Common myeloid progenitor, CD34-positive (primary cell): ENCODE measurements at regions of chr7 and their contacts with region 1.

Region 1: DNA sequence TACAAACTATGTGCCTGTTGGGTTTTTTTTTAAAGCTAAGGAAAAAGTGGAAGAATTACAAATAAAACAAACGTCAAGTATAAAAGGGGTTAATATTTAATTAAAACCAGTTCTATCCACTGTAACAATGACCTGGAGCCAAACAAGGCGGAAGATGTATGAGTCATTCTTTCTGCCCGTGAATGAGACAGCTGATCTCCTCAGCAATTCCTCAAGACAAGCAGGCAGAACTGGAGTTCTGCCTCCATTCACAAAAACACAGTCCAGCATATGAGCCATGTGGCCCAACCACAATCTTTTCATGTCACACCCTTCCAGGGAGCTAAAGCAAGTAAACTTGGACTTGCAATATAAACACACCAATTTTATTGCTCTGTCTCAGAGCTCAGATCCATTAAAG is 8.4 kb downstream of the ETV1 start:
- DNase-seq: peak in 2 of 3 donors; percentile 51 to 64
- H3K4me3 ChIP-seq: no peak overlapping the region
- H3K27ac ChIP-seq: peak overlapping the region in 1 of 2 experiments; percentile 27
- H3K4me1 ChIP-seq: no peaks in the 10 kb centered on the region
- H3K27me3 ChIP-seq: peaks cover 0 to 1% (median 0%) of the 10 kb centered on the region in 5 experiments

Region 2: GRCh38 chr7:13990984-13991790 is 10.1 kb after region 1 on chr7:
- CTCF ChIA-PET with region 1: interaction called, 10 read pairs
- POLR2A ChIA-PET with region 1: no interaction called
- DNase-seq: peak; percentile 93 to 94 (median 94)
- H3K4me3 ChIP-seq: peak overlapping the region; percentile 46 to 89 (median 78)
- H3K27ac ChIP-seq: peak overlapping the region in 1 of 2 experiments; percentile 79
- H3K4me1 ChIP-seq: peaks cover 10 to 35% (median 29%) of the 10 kb centered on the region in 4 experiments
- H3K27me3 ChIP-seq: peaks cover 0 to 11% (median 2%) of the 10 kb centered on the region in 5 experiments